ENCODE measurements at regions of chrX and their contacts with region 1.

Region 1: GRCh38 chrX:136546371-136546781 is 14.4 kb downstream of the VGLL1 start:
- DNase-seq: no peak
- ATAC-seq: no peak
- H3K4me3 ChIP-seq: no peak overlapping the region
- H3K27ac ChIP-seq: no peak overlapping the region
- H3K4me1 ChIP-seq: no peaks in the 10 kb centered on the region
- CTCF ChIP-seq: no peak
- EP300 ChIP-seq: no peak
- POLR2A ChIP-seq: no peak
- RAD21 ChIP-seq: no peak

Region 2: DNA sequence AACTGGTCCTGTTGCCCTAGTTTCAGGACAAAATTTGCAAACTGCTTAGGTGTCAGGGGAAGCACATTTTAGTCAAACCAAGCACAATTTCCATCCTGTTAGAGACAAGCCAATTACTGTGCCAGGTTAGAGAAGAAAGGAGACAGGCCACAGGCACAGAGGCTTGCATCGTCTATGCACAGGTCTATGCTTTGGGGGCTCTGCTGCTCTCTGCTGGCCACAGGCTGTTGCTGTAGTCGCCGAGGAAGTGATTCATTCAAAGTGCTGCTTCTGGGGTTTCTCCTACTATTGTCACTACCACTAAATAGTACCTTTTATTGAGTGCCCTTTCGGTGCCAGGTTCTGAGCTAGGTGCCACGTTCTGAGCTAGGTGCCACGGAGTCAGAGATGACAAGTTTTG is 31.2 kb after region 1 on chrX:
- CTCF ChIA-PET with region 1: interaction called, 10 read pairs
- POLR2A ChIA-PET with region 1: no interaction called
- DNase-seq: peak; percentile 35 to 44
- ATAC-seq: peak; percentile 95 to 99
- H3K4me3 ChIP-seq: no peak overlapping the region
- H3K27ac ChIP-seq: no peak overlapping the region
- H3K4me1 ChIP-seq: no peaks in the 10 kb centered on the region
- CTCF ChIP-seq: peak; percentile 50
- EP300 ChIP-seq: no peak
- POLR2A ChIP-seq: no peak
- RAD21 ChIP-seq: peak; percentile 57 to 59

Measured in A549 (cell line).